Left cardiac atrium (tissue), 4 donors: ENCODE measurements at regions of chr7 and their contacts with region 1.

Region 1: GRCh38 chr7:41661596-41661995 is 41.3 kb downstream of the INHBA start:
- DNase-seq: no peak
- ATAC-seq: no peak

Region 2: GRCh38 chr7:40419806-40420205 is 1241.8 kb before region 1 on chr7:
- intact Hi-C with region 1: loop called in 1 of 2 experiments (anchors 5 kb)
- DNase-seq: no peak
- ATAC-seq: no peak